Astrocyte of the cerebellum (primary cell): ENCODE measurements at regions of chrX and their contacts with region 1.

Region 1: DNA sequence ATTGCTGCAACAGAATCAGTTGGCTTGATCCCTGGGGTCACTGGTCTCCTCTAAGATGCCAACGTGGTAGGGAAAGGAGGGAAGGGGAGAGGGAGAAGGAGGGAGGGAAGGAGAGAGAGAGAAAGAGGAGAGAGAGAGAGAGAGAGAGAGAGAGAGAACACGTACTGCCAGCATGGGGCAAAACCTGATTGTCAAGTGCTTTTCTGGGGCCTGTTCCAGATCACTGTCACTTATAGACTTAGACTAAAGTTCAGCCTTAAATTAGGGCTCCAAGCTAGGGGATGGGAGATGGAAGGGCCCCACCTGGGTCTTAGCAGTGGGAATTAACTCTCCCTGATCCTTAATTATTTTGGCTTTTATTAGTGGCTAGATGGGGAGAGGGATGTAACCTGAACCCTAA is 12.9 kb downstream of the SHROOM4 start:
- DNase-seq: no peak
- H3K4me3 ChIP-seq: no peak overlapping the region
- CTCF ChIP-seq: no peak

Region 2: DNA sequence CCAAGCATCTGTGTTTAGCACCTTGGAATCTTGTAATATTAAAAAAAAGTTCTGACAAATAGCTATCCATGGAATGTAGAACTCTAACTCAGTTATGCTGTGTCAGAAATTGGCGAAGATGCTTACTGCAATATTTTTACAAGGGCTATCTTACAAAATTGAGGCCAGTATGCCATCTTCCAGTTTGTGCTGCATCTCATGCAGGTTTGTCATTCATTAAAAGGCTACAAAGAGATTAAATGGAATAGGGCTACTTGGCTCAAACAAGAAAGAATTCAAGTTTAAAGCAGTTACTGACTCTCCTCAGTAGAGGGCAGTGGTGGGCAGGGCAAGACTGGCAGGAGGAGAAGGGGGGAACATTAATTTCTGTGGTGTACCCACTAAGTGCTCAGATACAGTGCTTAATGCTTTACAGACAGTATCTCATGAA is 53.6 kb before region 1 on chrX:
- in situ Hi-C with region 1: loop called (anchors 5 kb)
- DNase-seq: no peak
- H3K4me3 ChIP-seq: no peak overlapping the region
- CTCF ChIP-seq: peak; percentile 72

Region 3: DNA sequence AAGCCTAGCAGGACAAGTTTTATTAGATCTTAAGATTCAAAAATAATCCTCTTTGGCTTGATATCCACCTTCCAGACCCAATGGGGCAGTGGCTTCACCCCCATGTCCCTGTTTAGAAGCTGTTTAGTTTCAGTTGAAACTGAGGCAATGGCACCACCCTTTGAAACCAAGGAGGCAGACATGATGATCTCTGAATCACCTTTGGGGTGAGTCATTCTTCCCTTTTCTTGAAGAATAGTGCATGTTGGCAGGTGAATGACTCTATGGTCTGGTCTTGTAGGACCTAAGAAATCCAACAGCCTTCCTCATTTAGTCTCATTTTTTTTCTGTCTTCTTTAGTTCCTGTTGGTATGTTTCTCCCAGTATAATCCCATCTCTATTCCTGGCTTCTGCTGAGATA is 79.9 kb after region 1 on chrX:
- in situ Hi-C with region 1: no loop called
- DNase-seq: no peak
- H3K4me3 ChIP-seq: no peak overlapping the region
- CTCF ChIP-seq: no peak